ENCODE measurements at regions of chr9 and their contacts with region 1.

Region 1: GRCh38 chr9:19969721-19970120 is 180.9 kb upstream of the SLC24A2 start:
- DNase-seq: no peak
- H3K4me3 ChIP-seq: no peak overlapping the region
- H3K27ac ChIP-seq: no peak overlapping the region
- H3K4me1 ChIP-seq: no peaks in the 10 kb centered on the region
- H3K27me3 ChIP-seq: no peaks in the 10 kb centered on the region
- CTCF ChIP-seq: no peak
- POLR2A ChIP-seq: no peak

Region 2: GRCh38 chr9:19992556-19992955 is 22.8 kb after region 1 on chr9:
- intact Hi-C with region 1: no loop called
- DNase-seq: no peak
- H3K4me3 ChIP-seq: no peak overlapping the region
- H3K27ac ChIP-seq: no peak overlapping the region
- H3K4me1 ChIP-seq: no peaks in the 10 kb centered on the region
- H3K27me3 ChIP-seq: no peaks in the 10 kb centered on the region
- CTCF ChIP-seq: no peak
- POLR2A ChIP-seq: no peak

Region 3: DNA sequence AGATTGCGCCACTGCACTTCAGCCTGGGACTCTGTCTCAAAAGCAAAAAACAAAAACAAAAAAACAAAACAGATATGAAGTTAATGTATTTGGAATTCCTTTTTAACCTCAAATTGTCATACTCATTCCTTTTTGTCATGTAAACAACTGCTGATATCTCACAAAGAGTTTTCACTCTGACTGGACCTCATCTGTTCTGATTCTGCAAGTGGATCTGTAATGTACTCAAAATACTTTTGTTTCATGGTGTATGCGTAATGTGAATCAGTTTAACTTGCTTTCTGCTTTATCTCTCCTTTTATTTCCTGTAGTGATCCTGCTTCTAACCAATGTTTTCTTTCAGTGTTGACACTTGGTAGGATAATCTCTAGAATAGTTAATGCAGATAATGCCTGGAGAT is 821.0 kb after region 1 on chr9:
- intact Hi-C with region 1: loop called (anchors 5 kb)
- DNase-seq: no peak
- H3K4me3 ChIP-seq: no peak overlapping the region
- H3K27ac ChIP-seq: no peak overlapping the region
- H3K4me1 ChIP-seq: no peaks in the 10 kb centered on the region
- H3K27me3 ChIP-seq: no peaks in the 10 kb centered on the region
- CTCF ChIP-seq: no peak
- POLR2A ChIP-seq: no peak

Measured in breast epithelium (tissue), 4 donors.